ENCODE measurements at regions of chrX and their contacts with region 1.

Region 1: GRCh38 chrX:14913241-14913640 is 40.0 kb downstream of the MOSPD2 start:
- DNase-seq: no peak

Region 2: GRCh38 chrX:16148896-16149295 is 1235.7 kb after region 1 on chrX:
- intact Hi-C with region 1: loop called in 1 of 2 experiments (anchors 5 kb)
- DNase-seq: no peak